Motor neuron (in vitro differentiated cells): ENCODE measurements at regions of chr18 and their contacts with region 1.

Region 1: DNA sequence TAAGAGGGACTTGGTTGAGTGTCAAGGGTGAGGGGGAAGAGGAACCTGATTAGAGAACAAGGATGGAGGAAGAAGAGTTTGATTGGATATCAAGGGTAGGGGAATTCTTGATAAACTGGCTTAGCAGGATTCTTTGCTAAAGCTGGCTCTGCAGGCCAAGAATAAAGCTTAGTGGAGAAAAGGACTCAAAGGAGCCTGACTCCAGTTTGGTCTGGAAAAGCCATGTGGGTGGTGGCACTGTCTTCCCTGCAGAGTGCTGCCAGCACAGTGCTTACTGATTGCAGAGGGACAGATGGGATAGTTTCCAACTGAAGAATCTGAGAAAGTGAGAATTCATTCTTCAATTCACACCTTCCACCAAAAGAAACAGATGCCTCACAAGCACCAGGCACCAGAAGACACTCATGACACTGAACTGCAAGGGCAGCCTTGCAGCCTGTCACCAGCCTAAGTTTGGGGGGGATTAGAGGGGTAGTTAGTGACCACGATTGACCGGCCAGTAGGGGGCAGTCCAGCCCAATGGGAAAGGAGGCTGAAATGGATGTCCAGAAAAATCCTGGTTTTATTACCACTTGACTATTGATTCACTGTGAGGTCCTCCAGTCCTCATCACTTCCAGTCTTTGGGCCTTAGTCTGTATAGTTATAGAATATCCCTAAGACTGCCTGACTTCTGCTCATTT is 334.5 kb downstream of the SMAD2 start:
- ATAC-seq: peak in 3 of 8 experiments; percentile 20 to 65 (median 60)
- H3K4me3 ChIP-seq: no peak overlapping the region
- H3K27ac ChIP-seq: no peak overlapping the region
- H3K4me1 ChIP-seq: peaks cover 19 to 20% of the 10 kb centered on the region in 2 donors

Region 2: DNA sequence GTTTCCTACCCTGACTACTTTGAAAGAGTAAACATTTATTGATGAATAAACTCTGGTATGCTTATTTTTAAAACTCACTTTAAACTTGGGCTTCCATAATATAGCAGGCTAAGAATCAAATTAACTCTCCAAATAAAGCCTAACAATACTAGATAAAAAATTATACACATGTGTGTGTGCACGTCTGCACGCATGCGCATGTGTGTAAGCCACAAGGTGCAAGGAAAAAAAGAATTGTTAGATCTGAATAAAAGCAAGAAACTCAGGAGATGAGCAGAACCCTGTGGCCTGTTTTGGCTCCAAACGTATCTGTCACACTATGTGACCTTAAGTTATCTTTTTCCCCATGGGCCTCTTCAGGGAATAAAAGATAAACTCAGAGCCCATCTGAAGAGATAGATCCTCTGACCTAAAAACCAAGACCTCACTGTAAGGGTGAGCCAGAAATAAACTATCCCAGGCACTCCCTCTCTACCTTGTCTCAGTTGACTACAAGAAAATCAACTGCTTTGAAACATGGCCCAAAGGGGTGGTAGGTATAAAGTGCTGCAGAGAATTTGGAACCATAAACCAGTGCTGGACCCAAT is 452.0 kb before region 1 on chr18:
- in situ Hi-C with region 1: no loop called
- ATAC-seq: no peak
- H3K4me3 ChIP-seq: no peak overlapping the region
- H3K27ac ChIP-seq: no peak overlapping the region
- H3K4me1 ChIP-seq: no peaks in the 10 kb centered on the region

Region 3: DNA sequence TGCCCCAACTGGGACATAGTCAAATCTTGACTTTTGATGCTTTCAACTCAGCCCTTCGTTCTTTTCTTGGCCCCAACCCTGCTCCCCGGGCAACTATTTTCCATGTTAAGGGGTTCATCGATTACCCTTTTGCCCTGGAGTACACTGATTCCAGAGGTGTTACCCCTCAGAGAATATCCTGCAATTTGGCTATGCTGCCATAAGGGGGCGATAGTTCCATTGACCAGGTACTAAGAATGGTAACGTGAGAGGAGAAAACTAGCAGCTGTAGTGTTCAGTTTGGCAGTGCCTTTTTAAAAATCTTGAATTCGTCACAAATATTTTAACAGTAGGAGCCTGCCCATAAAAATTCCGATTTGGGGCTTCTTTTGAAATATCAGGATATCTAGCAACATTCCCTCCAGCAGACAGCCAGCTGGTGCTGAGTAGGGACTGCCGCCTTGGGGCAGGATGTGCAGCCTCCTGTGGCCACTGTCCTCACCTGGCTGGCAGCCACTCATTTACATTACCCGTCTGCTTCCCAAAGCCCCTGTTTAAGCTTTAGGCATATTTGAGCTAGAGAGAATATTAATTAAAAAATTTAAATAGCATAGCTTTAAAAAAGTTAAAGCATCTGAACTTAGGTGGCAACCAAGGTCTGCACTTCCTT is 198.2 kb before region 1 on chr18:
- in situ Hi-C with region 1: loop called in 1 of 9 experiments (anchors 25 kb)
- ATAC-seq: peak in 3 of 8 experiments; percentile 35 to 46 (median 43)
- H3K4me3 ChIP-seq: no peak overlapping the region
- H3K27ac ChIP-seq: no peak overlapping the region
- H3K4me1 ChIP-seq: no peaks in the 10 kb centered on the region

Region 4: DNA sequence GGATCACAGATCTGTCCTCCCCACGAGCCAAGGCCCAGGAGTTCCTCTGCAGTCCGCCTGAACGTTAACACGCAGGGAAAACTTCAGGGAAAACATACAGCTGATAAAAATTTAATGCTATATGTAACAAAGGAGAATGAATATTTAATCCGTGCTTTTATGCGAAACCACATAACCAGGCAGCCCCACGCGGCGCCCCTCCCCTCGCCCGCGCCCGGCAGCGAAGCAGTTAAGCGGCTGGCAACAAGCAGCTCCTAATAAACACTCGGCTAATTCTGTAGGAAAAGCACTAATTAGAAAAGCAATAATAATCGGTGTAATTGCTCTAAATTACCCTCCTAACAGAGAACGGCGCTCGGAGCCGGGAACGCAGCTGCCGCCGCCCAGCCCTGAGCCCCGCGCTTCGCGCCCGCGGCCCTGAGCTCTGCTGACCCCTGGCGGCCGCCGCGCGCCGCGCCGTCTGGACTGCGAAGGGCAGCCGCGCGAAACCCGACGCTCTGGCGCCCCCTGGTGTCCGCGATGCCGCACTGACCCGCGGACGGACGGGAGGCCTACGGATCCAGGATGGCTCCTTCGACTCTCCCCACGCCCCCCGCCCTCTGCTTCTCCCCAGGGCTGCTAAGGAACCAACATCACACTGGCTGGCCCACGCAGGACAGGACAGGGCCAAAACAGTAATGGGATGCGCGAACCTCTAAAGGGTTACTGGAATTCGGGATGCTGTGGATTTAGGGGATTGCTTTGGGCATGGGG is 153.1 kb after region 1 on chr18:
- in situ Hi-C with region 1: loop called in 2 of 9 experiments (anchors 25 kb)
- ATAC-seq: peak; percentile 94 to 100 (median 99)
- H3K4me3 ChIP-seq: peak overlapping the region; percentile 23 to 38 (median 25)
- H3K27ac ChIP-seq: no peak overlapping the region
- H3K4me1 ChIP-seq: no peaks in the 10 kb centered on the region